B cell (primary cell): ENCODE measurements at regions of chr14 and their contacts with region 1.

Region 1: DNA sequence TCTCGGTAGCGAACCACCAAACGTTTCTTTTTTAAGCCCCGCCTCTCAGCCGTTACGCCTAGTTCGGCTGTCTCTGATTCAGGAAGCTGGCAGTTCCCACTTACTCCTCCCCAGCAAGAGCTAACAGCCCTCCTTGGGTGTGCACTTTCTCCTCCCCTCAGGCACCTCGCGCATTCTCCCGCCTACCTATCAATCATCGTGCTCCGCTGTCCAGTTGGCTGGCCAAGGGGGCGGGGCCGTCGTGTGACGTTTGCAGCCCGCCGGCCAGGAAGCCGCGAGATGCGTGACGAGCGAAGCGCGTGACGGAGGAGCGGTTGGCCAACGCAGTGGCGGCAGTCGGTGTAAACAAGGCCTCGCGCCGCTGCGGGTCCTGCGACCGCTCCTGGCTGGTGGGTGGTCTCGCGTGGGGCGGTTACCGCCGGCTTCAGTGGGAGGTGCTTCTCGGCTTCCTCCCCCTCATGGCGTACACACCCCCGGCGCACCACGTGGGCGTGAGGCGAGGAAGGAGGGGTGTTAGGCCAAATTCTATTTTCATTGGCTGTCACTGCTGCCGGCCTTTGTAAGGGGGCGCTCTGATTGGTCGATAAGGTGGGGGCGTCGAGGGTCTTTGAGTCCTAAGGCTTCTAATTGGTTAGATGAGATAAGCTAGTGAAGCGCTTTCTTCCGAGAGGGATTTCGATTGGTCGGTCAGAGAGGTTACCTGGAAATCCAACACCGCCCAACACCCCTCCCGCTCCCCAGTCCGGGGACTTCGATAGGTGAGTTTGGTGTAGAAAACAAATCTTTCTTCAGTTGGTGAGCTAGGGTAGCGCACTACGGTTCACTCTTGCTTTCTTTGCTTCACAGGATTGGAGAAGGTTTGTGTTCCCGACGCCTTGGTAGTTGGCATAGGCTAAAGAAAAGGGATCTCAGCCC is at the starts of genes DCAF11 and NRL:
- DNase-seq: peak; percentile 100
- ATAC-seq: peak; percentile 81
- H3K4me3 ChIP-seq: peak within 1 kb of the TSS; percentile 88 to 99 (median 97)
- H3K4me3 Mint-ChIP-seq: peak within 1 kb of the TSS; percentile 93
- H3K27ac ChIP-seq: peak within 1 kb of the TSS; percentile 99 to 100
- H3K27ac Mint-ChIP-seq: peak within 1 kb of the TSS; percentile 100
- H3K4me1 ChIP-seq: peaks cover 17 to 25% of the 10 kb centered on the region in 2 donors
- H3K4me1 Mint-ChIP-seq: peaks cover 26% of the 10 kb centered on the region
- H3K27me3 ChIP-seq: no peaks in the 10 kb centered on the region
- H3K27me3 Mint-ChIP-seq: no peaks in the 10 kb centered on the region
- CTCF ChIP-seq: no peak
- total RNA-seq, gene DCAF11: 84.8 and 96.3 TPM in 2 replicates
- total RNA-seq, gene NRL: 8.1 and 8.8 TPM in 2 replicates

Region 2: DNA sequence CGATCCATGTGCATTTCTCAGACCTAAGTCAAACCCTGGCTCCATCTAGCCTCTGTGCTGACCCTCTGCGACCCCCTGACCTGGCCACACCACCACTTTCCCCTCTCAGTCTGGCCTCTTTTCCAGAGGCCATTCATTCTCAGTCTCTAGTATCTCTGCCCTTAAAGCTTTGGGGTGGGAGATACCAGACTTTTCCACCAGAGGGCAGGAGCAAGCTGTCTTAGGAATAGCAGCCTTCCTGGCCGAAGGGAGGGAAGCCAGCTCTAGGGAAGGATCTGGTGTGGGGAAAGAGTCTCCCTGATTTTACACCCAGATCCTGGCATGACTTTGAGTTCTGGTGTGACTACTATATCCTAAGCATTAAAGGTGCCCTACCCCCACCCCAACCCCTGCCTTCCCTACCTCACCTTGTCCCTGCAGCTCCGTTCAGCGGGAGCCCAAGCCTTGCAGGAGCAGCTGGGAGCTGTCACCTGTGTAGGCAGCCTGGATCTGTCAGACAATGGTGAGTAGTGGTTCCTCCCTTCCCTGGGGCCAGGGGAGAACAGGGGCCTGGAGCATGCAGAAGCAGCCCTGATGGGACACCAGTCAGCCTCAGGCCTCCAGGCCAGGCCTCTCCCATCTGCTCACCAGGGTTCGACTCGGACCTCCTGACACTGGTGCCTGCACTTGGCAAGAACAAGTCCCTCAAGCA is 56.4 kb before region 1 on chr14:
- CTCF ChIA-PET with region 1: interaction called, 220 read pairs
- POLR2A ChIA-PET with region 1: interaction called, 3 read pairs
- intact Hi-C with region 1: no loop called
- DNase-seq: no peak
- ATAC-seq: peak; percentile 68
- H3K4me3 ChIP-seq: no peak overlapping the region
- H3K4me3 Mint-ChIP-seq: no peak overlapping the region
- H3K27ac ChIP-seq: no peak overlapping the region
- H3K27ac Mint-ChIP-seq: no peak overlapping the region
- H3K4me1 ChIP-seq: no peaks in the 10 kb centered on the region
- H3K4me1 Mint-ChIP-seq: peaks cover 1% of the 10 kb centered on the region
- H3K27me3 ChIP-seq: peaks cover 0 to 26% (median 5%) of the 10 kb centered on the region in 4 experiments
- H3K27me3 Mint-ChIP-seq: no peaks in the 10 kb centered on the region
- CTCF ChIP-seq: peak; percentile 75

Region 3: DNA sequence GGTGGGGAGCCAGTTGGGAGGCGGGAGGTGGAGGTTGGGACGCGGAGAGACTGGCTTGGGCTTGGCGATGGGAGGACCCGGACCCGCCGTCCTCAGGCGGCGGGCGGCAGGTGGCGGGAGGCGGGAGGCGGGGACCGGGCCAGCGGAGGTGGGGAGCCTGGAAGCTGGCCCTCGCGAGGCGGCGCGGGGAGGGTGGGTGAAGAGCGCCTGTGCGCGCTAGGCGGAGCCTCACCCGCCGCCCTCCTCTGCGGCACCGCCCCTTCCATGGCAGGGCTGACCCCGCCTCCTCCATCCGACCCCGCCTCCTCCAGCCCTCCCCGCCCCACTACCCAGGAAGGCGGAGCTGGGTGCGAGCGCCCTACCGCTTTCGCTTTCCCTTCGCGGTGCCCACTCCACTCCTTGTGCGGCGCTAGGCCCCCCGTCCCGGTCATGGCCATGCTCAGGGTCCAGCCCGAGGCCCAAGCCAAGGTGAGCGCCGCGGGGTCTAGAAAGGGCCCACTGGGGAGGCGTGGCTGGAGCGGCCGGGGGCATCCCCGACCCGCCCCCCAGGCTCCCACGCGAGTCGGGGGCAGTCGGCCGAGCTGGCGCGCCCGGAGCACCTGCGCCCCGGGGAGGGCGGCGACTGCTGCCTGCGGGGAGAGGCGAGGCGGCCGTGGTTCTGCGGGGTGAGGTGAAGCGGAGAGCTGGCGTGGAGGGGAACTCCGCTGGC is 21.2 kb after region 1 on chr14 and contains the start of gene PSME1:
- CTCF ChIA-PET with region 1: interaction called, 28 read pairs
- POLR2A ChIA-PET with region 1: interaction called, 49 read pairs
- intact Hi-C with region 1: loop called (anchors 1 kb)
- DNase-seq: peak; percentile 96
- ATAC-seq: peak; percentile 97
- H3K4me3 ChIP-seq: peak within 1 kb of the TSS; percentile 54 to 96 (median 78)
- H3K4me3 Mint-ChIP-seq: peak within 1 kb of the TSS; percentile 92
- H3K27ac ChIP-seq: peak within 1 kb of the TSS; percentile 87 to 97
- H3K27ac Mint-ChIP-seq: peak within 1 kb of the TSS; percentile 94
- H3K4me1 ChIP-seq: peaks cover 33 to 43% of the 10 kb centered on the region in 2 donors
- H3K4me1 Mint-ChIP-seq: peaks cover 57% of the 10 kb centered on the region
- H3K27me3 ChIP-seq: no peaks in the 10 kb centered on the region
- H3K27me3 Mint-ChIP-seq: no peaks in the 10 kb centered on the region
- CTCF ChIP-seq: no peak
- total RNA-seq, gene PSME1: 227 and 237 TPM in 2 replicates

Region 4: DNA sequence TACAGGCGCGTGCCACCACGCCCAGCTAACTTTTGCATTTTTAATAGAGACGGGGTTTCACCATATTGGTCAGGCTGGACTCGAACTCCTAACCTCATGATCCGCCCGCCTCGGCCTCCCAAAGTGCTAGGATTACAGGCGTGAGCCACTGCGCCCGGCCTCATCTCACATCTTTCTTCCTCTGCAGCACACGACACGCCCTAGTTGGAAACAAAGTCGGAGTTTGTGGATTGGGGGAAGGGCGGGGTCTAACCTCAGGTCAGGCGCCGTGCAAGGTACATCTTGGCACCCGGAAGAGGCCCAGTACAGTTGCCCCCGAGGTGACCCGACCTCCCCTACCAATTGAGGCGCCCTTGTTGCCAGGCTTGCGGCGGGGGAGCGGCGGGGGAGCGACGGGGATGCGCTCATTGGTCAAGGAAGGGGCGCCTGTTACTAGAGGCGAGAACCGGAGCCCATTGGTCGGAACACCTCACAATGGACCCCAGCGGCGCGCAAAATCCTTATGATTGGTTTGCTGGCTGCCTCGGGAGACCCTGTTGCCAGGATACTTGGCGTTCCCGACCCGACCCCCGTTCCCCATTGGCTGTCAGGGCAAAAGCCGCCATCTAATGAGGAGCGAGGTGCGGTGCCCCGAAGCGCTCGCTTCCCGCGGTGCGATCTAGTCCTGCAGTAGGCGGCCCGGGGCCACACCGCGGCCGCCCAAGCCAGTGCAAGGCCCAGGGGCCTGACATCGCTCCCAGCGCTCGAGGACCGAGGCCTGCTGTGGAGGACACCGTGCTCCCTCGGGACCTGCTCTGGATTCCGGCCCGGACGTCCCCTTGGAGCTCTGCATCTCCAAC is 56.8 kb after region 1 on chr14 and contains the start of gene REC8:
- CTCF ChIA-PET with region 1: interaction called, 3 read pairs
- POLR2A ChIA-PET with region 1: interaction called, 4 read pairs
- intact Hi-C with region 1: loop called (anchors 1 kb)
- DNase-seq: peak; percentile 89
- ATAC-seq: peak; percentile 92
- H3K4me3 ChIP-seq: peak within 1 kb of the TSS; percentile 47 to 72 (median 60)
- H3K4me3 Mint-ChIP-seq: peak within 1 kb of the TSS; percentile 93
- H3K27ac ChIP-seq: no peak within 1 kb of the TSS
- H3K27ac Mint-ChIP-seq: peak within 1 kb of the TSS; percentile 79
- H3K4me1 ChIP-seq: peaks cover 11 to 23% of the 10 kb centered on the region in 2 donors
- H3K4me1 Mint-ChIP-seq: peaks cover 20% of the 10 kb centered on the region
- H3K27me3 ChIP-seq: no peaks in the 10 kb centered on the region
- H3K27me3 Mint-ChIP-seq: no peaks in the 10 kb centered on the region
- CTCF ChIP-seq: no peak
- total RNA-seq, gene REC8: 48.4 and 62.1 TPM in 2 replicates

Region 5: DNA sequence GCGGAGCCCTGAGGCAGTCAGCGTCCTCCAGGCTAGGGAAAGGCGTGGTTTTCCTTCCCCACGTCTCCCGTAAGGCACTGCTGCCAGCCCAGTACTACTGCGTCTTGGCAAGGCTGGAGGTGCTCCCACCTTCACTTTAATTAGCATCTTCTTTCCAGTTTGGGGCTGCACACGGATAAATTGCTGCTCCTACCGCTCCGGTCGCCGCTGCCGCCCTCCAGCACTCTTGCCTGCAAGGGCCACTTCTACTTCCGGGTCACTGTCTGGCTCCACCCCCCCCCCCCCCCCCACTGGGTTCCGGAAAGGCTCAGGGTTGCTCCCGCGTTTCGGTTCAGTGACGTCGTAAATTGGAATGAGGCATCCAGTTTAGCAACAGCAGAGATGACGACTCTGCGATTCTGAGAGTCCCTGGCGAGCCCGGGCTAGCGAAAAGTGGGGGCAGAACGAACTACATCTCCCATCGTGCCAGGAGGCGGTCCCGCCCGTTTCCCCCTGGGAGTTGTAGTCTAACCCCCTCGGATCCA is 117.4 kb after region 1 on chr14 and contains the start of gene NEDD8:
- CTCF ChIA-PET with region 1: no interaction called
- POLR2A ChIA-PET with region 1: no interaction called
- intact Hi-C with region 1: loop called (anchors 2 kb)
- DNase-seq: peak; percentile 95
- ATAC-seq: peak; percentile 86
- H3K4me3 ChIP-seq: peak within 1 kb of the TSS; percentile 75 to 100 (median 97)
- H3K4me3 Mint-ChIP-seq: peak within 1 kb of the TSS; percentile 96
- H3K27ac ChIP-seq: peak within 1 kb of the TSS; percentile 36 to 67
- H3K27ac Mint-ChIP-seq: peak within 1 kb of the TSS; percentile 95
- H3K4me1 ChIP-seq: peaks cover 18 to 24% of the 10 kb centered on the region in 2 donors
- H3K4me1 Mint-ChIP-seq: peaks cover 55% of the 10 kb centered on the region
- H3K27me3 ChIP-seq: no peaks in the 10 kb centered on the region
- H3K27me3 Mint-ChIP-seq: no peaks in the 10 kb centered on the region
- CTCF ChIP-seq: no peak
- total RNA-seq, gene NEDD8: 86.6 and 98.5 TPM in 2 replicates

Region 6: DNA sequence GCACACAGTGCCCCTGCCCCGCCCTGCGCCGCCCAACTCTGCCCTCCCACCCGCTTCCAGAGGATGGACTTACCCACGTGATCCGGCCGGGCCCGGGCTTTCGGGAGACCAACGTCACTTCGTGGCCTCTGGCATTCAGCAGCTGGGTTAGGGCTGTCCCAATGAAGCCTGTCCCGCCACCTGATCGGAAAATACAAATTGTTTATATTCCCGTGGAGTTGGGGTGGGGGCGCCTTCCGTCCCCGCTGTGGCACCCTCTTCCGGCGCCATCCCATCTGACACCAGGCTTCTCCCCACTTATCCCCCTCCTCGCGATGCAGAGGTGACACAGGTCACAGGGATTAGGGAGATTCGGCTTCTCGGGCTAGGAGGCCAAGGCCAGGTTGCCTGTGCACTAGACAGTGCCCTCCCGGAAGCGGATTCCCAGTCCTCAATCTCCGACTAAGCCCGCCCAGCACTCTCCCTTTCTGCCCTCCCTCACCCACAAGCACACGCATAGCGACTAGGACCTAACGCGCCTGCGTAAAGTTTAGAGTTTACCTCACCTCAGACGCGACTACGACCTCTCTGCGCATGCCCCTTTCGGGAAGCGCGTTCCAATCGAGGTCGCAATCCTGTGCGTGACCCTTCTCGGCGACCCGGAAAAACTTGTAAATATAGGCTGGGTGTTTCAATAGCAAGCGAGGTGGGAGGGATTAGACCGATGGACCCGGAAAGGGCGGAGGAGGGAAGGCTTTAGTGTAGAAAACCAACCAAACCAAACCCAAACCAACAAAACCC is 327.7 kb after region 1 on chr14 and contains the start of gene SDR39U1:
- CTCF ChIA-PET with region 1: no interaction called
- POLR2A ChIA-PET with region 1: no interaction called
- intact Hi-C with region 1: loop called (anchors 2 kb)
- DNase-seq: peak; percentile 99
- ATAC-seq: peak; percentile 89
- H3K4me3 ChIP-seq: peak within 1 kb of the TSS; percentile 86 to 98 (median 94)
- H3K4me3 Mint-ChIP-seq: peak within 1 kb of the TSS; percentile 97
- H3K27ac ChIP-seq: peak within 1 kb of the TSS; percentile 96
- H3K27ac Mint-ChIP-seq: peak within 1 kb of the TSS; percentile 98
- H3K4me1 ChIP-seq: peaks cover 20 to 29% of the 10 kb centered on the region in 2 donors
- H3K4me1 Mint-ChIP-seq: peaks cover 48% of the 10 kb centered on the region
- H3K27me3 ChIP-seq: no peaks in the 10 kb centered on the region
- H3K27me3 Mint-ChIP-seq: no peaks in the 10 kb centered on the region
- CTCF ChIP-seq: no peak
- total RNA-seq, gene SDR39U1: 107 and 126 TPM in 2 replicates

Region 7: GRCh38 chr14:24595073-24595808 is 480.4 kb after region 1 on chr14:
- CTCF ChIA-PET with region 1: no interaction called
- POLR2A ChIA-PET with region 1: no interaction called
- intact Hi-C with region 1: no loop called
- DNase-seq: no peak
- ATAC-seq: no peak
- H3K4me3 ChIP-seq: no peak overlapping the region
- H3K4me3 Mint-ChIP-seq: no peak overlapping the region
- H3K27ac ChIP-seq: no peak overlapping the region
- H3K27ac Mint-ChIP-seq: no peak overlapping the region
- H3K4me1 ChIP-seq: no peaks in the 10 kb centered on the region
- H3K4me1 Mint-ChIP-seq: no peaks in the 10 kb centered on the region
- H3K27me3 ChIP-seq: peaks cover 0 to 9% (median 1%) of the 10 kb centered on the region in 4 experiments
- H3K27me3 Mint-ChIP-seq: peaks cover 36% of the 10 kb centered on the region
- CTCF ChIP-seq: no peak